Naive thymus-derived CD4-positive, alpha-beta T cell (primary cell): ENCODE measurements at regions of chr3 and their contacts with region 1.

Region 1: DNA sequence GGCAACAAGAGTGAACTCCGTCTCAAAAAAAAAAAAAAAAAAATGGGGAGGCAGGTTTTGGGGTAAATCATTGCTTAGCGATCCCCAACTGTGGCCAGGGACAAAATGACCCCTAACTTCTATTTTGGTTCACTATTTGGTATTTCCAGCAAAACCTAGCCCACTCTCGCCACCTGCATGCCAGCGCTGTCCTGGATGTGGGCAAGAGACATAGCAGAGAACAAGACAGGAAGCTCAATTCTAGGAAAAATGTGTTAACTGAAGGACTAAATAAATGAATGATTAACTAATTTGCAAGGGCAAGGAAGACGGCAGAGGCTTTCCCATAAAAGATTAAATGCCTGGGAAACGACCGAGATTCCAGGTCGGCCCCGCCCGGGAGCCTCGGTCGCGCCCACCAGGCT is 425 bp downstream of the NICN1 start:
- DNase-seq: peak in 1 of 9 donors; percentile 13
- ATAC-seq: no peak
- H3K4me3 ChIP-seq: peak overlapping the region; percentile 84
- H3K4me3 Mint-ChIP-seq: peak overlapping the region; percentile 88 to 98 (median 94)
- H3K27ac ChIP-seq: peak overlapping the region; percentile 83
- H3K27ac Mint-ChIP-seq: peak overlapping the region; percentile 49 to 96 (median 94)
- H3K4me1 ChIP-seq: peaks cover 0 to 5% of the 10 kb centered on the region in 2 donors
- H3K4me1 Mint-ChIP-seq: peaks cover 17 to 37% (median 28%) of the 10 kb centered on the region in 7 donors
- H3K27me3 ChIP-seq: no peaks in the 10 kb centered on the region
- H3K27me3 Mint-ChIP-seq: no peaks in the 10 kb centered on the region

Region 2: DNA sequence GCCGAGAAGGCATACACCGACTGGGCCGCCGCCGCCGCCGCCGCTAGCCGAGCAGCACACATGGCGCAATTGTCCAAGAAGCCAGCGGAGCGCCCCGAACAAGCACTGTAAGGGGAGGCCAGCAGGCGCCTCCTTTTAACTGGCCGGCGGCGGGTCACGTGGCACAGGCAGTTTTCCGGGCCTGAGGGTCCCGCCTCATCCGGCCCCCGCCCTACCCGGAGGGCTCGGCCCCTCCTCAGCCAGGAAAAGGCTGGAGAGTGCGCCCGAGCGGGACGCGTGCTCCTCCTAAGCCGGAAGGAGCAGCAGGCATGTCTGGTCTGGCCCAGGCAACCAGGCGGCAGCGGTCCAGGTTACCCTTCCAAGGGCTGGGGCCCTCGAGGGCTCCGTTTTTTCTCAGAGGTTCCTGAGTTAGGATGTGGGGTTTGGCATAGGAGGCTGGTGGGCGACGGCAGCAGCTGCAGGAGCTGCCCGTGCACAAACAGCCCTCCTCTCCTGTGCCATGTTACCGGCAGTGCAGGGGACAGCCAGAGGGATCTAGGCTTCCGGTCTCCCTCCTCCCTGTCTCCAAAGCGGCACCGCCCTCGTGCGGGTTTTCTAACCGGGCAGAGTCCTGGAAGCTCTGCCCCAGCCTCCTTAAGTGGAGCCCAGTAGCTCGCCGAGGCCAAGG is 70.3 kb before region 1 on chr3 and contains the start of gene GPX1:
- CTCF ChIA-PET with region 1: no interaction called
- POLR2A ChIA-PET with region 1: interaction called, 4 read pairs
- intact Hi-C with region 1: loop called in 1 of 2 experiments (anchors 5 kb)
- DNase-seq: peak; percentile 45 to 89 (median 57)
- ATAC-seq: peak; percentile 87
- H3K4me3 ChIP-seq: peak within 1 kb of the TSS; percentile 85
- H3K4me3 Mint-ChIP-seq: peak within 1 kb of the TSS; percentile 88 to 99 (median 92)
- H3K27ac ChIP-seq: peak within 1 kb of the TSS; percentile 81
- H3K27ac Mint-ChIP-seq: peak within 1 kb of the TSS; percentile 92 to 98 (median 95)
- H3K4me1 ChIP-seq: peaks cover 17% of the 10 kb centered on the region in 2 donors
- H3K4me1 Mint-ChIP-seq: peaks cover 14 to 43% (median 25%) of the 10 kb centered on the region in 7 donors
- H3K27me3 ChIP-seq: no peaks in the 10 kb centered on the region
- H3K27me3 Mint-ChIP-seq: no peaks in the 10 kb centered on the region
- total RNA-seq, gene GPX1: 56.9 to 201 (median 86.9) TPM

Region 3: GRCh38 chr3:49445381-49445780 is 16.7 kb after region 1 on chr3:
- CTCF ChIA-PET with region 1: interaction called, 6 read pairs
- POLR2A ChIA-PET with region 1: interaction called, 5 read pairs
- intact Hi-C with region 1: loop called (anchors 1 to 2 kb)
- DNase-seq: no peak
- ATAC-seq: no peak
- H3K4me3 ChIP-seq: no peak overlapping the region
- H3K4me3 Mint-ChIP-seq: no peak overlapping the region
- H3K27ac ChIP-seq: no peak overlapping the region
- H3K27ac Mint-ChIP-seq: peak overlapping the region in 3 of 9 donors; percentile 45 to 92 (median 60)
- H3K4me1 ChIP-seq: peaks cover 10 to 15% of the 10 kb centered on the region in 2 donors
- H3K4me1 Mint-ChIP-seq: peaks cover 5 to 25% (median 18%) of the 10 kb centered on the region in 7 donors
- H3K27me3 ChIP-seq: no peaks in the 10 kb centered on the region
- H3K27me3 Mint-ChIP-seq: no peaks in the 10 kb centered on the region